Heart left ventricle (tissue), 16 donors: ENCODE measurements at regions of chr2 and their contacts with region 1.

Region 1: DNA sequence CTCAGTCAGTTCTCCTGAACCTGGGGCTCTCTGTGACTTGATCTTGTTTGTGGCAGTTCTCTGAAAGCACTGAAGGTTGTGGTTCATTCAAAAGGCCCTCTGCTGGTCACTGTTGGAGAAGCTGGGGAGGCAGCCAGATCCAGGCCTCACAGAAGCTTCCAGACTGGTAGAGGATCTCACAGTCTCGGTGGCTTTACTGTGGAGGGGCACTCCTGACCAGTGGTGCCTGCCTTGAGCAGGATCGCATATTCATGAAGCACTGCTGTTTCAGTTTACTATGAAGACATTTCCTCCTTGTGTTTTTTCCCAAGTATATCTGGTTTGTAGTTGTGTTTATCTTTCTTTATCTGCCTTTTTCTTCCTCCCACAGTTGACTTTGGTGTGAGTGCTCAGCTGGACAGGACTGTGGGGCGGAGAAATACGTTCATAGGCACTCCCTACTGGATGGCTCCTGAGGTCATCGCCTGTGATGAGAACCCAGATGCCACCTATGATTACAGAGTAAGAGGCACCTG is 133.9 kb downstream of the MAP4K4 start:
- DNase-seq: peak in 4 of 5 donors; percentile 72 to 79 (median 76)
- ATAC-seq: peak; percentile 70 to 84 (median 80)
- H3K4me3 ChIP-seq: no peak overlapping the region
- H3K27ac ChIP-seq: peak overlapping the region in 10 of 12 donors; percentile 40 to 76 (median 56)
- H3K4me1 ChIP-seq: peaks cover 9 to 58% (median 53%) of the 10 kb centered on the region in 12 donors
- H3K27me3 ChIP-seq: no peaks in the 10 kb centered on the region
- CTCF ChIP-seq: peak; percentile 64 to 87 (median 78)
- POLR2A ChIP-seq: no peak

Region 2: DNA sequence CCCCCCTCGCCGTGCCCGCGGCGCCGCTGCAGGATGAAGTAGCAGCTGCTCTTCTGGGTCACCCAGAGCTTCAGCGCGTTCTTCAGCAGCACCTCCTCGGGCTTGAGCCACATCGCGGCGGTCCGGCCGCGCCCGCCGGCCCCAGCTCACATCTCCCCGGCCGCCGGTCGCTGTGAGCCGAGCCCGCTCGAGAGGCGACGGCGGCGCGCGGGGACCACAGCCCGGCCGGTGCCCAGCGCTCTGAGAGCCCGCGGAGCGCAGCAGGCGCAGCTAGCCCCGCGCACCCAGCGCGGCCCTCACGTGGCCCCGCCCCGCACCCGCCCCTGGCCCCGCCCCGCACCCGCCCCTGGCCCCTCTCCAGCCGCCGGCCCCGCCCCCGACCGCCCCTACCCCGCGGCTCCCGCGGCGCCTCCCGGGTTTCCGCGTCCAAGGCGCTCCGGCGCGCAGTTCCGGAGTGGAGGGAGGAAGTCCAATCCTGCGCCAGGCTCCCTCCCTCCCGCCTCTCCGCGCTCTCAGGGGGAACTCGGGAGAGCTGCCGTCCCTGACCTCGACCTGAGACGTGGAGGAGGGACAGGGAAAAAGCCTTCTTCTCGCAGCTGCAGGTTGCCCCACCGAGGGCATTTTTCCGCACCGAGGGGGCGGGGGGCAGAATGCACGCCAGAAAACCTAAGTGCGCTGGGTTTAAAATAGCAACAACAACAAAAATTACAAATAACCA is 680.1 kb before region 1 on chr2 and contains the start of gene TBC1D8:
- intact Hi-C with region 1: no loop called
- DNase-seq: peak; percentile 93 to 96 (median 95)
- ATAC-seq: peak; percentile 85 to 91 (median 88)
- H3K4me3 ChIP-seq: peak within 1 kb of the TSS; percentile 72 to 95 (median 84)
- H3K27ac ChIP-seq: peak within 1 kb of the TSS; percentile 57 to 97 (median 92)
- H3K4me1 ChIP-seq: peaks cover 3 to 78% (median 59%) of the 10 kb centered on the region in 12 donors
- H3K27me3 ChIP-seq: no peaks in the 10 kb centered on the region
- CTCF ChIP-seq: peak in 1 of 12 donors; percentile 15
- POLR2A ChIP-seq: peak; percentile 50 to 95
- total RNA-seq, gene TBC1D8: 36.9 to 61.7 (median 53.3) TPM

Region 3: DNA sequence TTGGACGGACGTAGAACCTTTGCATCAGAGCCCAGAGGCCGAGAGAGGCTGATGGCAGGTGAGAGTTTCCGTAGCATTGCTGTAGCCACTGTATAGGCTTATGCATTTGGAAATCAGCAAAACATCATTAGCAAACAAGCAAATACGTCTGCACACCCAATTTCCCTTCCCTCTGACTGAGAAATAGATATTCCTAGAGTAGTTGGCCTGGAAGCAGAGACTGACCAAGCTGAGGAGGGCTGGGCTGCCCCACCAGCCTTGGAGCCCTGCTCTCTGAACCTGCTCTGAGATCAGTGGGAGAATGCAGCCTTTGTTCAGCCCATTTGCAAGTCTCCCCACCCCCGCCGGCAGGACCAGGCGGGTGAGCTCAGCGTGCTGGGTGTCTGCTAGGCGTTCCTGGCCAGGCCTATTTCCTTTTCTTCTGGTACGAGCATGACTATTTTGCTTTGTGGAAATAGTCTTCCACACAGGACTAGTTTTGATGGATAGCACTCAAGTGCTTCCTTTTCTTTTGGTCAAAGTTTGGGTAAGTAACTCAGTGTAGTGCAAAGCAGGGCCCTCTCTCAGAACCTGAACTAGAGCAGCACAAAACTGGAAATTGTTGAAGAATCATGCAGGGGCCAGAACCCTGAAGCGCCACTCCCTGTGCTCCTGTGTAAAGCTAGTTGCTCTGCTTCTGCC is 501.0 kb before region 1 on chr2:
- intact Hi-C with region 1: loop called in 1 of 10 experiments (anchors 10 kb)
- DNase-seq: peak; percentile 61 to 76 (median 64)
- ATAC-seq: peak in 3 of 4 donors; percentile 80 to 88 (median 86)
- H3K4me3 ChIP-seq: no peak overlapping the region
- H3K27ac ChIP-seq: peak overlapping the region in 8 of 12 donors; percentile 8 to 93 (median 35)
- H3K4me1 ChIP-seq: peaks cover 0 to 43% (median 9%) of the 10 kb centered on the region in 12 donors
- H3K27me3 ChIP-seq: no peaks in the 10 kb centered on the region
- CTCF ChIP-seq: no peak
- POLR2A ChIP-seq: no peak

Region 4: DNA sequence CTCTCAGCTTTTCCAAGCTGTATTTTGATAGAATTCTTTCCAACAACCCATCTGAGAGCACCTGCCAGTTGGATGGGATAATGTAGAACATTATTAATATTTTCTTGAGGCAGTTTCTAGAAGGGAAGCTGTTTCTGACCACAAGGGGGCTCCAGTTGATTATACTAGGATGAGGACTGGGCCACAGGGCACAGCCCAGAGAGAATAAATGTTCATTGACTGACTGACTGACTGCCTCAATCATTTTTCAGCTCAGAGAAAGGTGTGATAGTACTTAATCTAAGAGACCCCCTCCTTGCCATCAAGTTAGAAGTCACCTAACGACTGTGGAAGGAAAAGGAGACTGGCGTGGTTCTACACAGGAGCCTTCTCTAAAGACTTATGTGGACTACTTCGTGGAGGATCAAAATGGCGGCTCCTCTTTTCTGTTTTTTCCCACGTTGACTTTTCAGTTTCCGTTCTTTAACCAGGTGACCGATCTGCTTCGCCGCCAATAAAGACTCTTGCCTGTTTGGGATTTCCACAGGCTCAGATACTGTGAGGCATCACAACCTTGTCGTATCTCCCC is 412.2 kb before region 1 on chr2:
- intact Hi-C with region 1: loop called (anchors 1 to 5 kb)
- DNase-seq: peak in 4 of 5 donors; percentile 47 to 68 (median 62)
- ATAC-seq: peak; percentile 55 to 89 (median 76)
- H3K4me3 ChIP-seq: no peak overlapping the region
- H3K27ac ChIP-seq: no peak overlapping the region
- H3K4me1 ChIP-seq: peaks cover 0 to 4% (median 0%) of the 10 kb centered on the region in 12 donors
- H3K27me3 ChIP-seq: no peaks in the 10 kb centered on the region
- CTCF ChIP-seq: peak; percentile 66 to 90 (median 83)
- POLR2A ChIP-seq: no peak

Region 5: GRCh38 chr2:101770726-101771125 is 60.7 kb before region 1 on chr2:
- intact Hi-C with region 1: loop called in 5 of 10 experiments (anchors 2 to 10 kb)
- DNase-seq: no peak
- ATAC-seq: peak; percentile 11 to 44 (median 40)
- H3K4me3 ChIP-seq: no peak overlapping the region
- H3K27ac ChIP-seq: peak overlapping the region in 5 of 12 donors; percentile 2 to 14 (median 4)
- H3K4me1 ChIP-seq: peaks cover 8 to 100% (median 88%) of the 10 kb centered on the region in 12 donors
- H3K27me3 ChIP-seq: no peaks in the 10 kb centered on the region
- CTCF ChIP-seq: peak in 9 of 12 donors; percentile 33 to 55 (median 39)
- POLR2A ChIP-seq: no peak

Region 6: DNA sequence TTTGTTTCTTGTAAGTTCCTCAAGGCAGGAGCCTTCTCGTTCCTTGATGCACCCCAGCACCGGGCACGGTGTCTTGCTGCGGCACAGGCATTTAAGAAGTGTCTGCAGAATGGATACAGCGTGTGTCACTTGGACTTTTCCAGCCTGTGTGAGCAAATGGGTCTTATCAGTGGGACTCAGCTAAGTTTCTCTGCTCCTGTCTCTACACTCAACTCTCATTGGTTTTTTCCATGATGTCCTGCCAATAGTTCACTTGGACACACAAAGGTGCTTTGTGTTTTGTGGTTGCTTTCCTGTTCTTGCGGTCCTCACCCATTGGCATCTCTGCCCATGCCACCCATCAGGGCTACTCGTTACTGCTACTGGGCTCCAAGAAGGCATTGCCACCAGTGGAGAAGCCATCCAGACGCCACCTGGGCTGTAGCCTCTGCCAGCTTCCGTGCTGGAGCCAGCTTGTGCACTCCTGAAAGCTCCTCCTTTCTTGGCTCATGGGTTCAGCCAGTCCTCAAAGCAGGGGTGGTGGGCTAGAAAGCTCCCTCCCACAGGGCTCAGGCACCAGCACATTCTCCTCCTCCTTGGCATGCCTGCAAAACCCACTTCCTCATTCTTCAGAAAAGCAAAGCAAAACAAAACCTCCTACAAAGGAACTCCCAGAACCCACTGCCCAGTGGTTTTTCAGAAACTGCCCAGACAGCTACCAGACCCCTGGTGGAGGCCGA is 201.8 kb after region 1 on chr2:
- intact Hi-C with region 1: no loop called
- DNase-seq: peak; percentile 64 to 76 (median 70)
- ATAC-seq: peak; percentile 74 to 84 (median 78)
- H3K4me3 ChIP-seq: peak overlapping the region in 1 of 12 donors; percentile 6
- H3K27ac ChIP-seq: peak overlapping the region in 10 of 12 donors; percentile 30 to 92 (median 66)
- H3K4me1 ChIP-seq: peaks cover 0 to 61% (median 18%) of the 10 kb centered on the region in 12 donors
- H3K27me3 ChIP-seq: no peaks in the 10 kb centered on the region
- CTCF ChIP-seq: no peak
- POLR2A ChIP-seq: no peak